Activated CD4-positive, alpha-beta T cell treated with anti-CD3 and anti-CD28 coated beads, Interleukin-2, amount 10 ng/mL, durations not matched to agents 7 days and 5 days (primary cell): ENCODE measurements at regions of chr5 and their contacts with region 1.

Region 1: DNA sequence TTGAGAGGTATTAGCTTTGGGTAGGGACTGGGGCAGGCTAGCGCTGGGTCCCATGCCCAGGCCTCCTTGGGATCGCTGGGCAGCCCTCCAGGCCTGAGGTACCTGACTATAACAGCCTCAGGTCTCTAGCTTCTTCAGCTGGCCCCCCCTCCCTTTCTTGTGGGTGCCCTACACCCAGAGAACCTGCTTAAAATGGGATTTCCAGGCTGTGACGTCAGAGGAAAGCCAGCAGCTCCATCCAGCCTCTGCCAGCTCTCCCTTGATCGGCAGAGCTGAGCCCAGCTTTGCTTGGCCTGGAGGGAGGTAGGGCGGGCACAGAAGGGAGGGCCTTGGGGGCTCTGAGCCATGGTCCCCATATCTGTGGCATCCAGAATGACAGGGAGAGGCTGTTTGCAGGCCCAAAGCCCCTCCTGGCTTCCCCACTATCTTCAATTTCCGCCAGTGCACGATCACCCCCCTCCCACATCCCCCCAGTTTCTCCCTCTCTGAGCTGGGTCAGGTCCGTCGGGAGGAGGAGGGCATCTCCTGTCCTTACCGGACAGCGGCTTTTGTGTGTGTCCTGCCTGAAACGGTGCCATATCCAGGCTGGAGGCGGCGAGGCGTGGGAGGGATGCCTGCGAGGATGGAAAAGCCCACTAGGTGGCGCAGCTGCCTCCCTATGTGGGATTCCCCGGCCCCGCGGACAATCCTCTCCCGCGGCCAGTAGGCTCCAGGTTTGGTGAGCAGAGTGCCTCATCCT is 10.8 kb downstream of the REEP2 start:
- DNase-seq: peak; percentile 76
- H3K4me3 Mint-ChIP-seq: peak overlapping the region; percentile 11
- H3K27ac Mint-ChIP-seq: no peak overlapping the region
- H3K4me1 Mint-ChIP-seq: peaks cover 5% of the 10 kb centered on the region
- H3K27me3 Mint-ChIP-seq: no peaks in the 10 kb centered on the region

Region 2: GRCh38 chr5:138438724-138439476 is 10.8 kb before region 1 on chr5 and contains the start of gene REEP2:
- CTCF ChIA-PET with region 1: interaction called, 49 read pairs
- POLR2A ChIA-PET with region 1: no interaction called
- DNase-seq: peak; percentile 57
- H3K4me3 Mint-ChIP-seq: peak within 1 kb of the TSS; percentile 71
- H3K27ac Mint-ChIP-seq: peak within 1 kb of the TSS; percentile 41
- H3K4me1 Mint-ChIP-seq: peaks cover 9% of the 10 kb centered on the region
- H3K27me3 Mint-ChIP-seq: peaks cover 2% of the 10 kb centered on the region
- total RNA-seq, gene REEP2: 0.62 to 0.77 TPM

Region 3: GRCh38 chr5:138508963-138509362 is 59.3 kb after region 1 on chr5:
- CTCF ChIA-PET with region 1: interaction called, 13 read pairs
- POLR2A ChIA-PET with region 1: no interaction called
- DNase-seq: no peak
- H3K4me3 Mint-ChIP-seq: no peak overlapping the region
- H3K27ac Mint-ChIP-seq: no peak overlapping the region
- H3K4me1 Mint-ChIP-seq: peaks cover 2% of the 10 kb centered on the region
- H3K27me3 Mint-ChIP-seq: no peaks in the 10 kb centered on the region

Region 4: DNA sequence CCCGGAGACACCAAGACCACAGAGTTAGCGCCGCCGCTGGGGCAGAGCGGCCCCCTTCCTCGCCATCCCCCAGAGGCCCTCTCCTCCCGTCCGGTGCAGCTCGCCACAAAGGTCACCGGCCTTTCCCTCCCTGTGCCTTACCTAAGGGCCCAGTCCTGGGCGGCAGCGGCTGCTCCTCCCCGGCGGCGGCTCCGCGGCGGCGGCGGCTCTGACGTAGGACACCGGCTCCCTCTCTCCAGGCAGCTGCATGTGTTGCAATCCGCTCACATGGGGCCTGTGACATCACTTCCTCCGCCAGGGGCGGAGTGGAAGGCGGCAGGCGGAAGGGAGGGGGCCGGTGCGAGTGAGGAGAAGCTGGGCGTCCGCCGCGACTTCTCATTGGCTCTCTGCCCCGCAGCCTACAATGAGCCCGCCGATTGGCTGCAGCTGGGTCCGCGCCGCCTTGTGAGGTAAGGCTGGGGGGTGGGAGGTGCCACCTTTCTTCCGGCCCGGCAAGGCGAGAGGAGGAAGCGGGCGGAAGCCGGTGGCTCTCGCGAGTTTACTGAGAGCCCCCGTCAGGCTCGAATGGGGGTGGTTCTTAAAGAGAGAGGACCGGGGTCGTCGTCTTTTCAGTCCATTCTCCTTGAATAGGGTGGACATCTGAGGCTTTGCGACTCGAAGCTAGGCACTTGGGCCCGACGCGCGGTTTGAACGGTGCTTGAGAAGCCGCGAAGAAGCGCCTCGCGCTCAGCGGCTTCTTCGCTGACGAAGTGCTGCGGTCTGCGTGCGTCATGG is 93.5 kb after region 1 on chr5 and contains the start of gene ETF1:
- CTCF ChIA-PET with region 1: interaction called, 10 read pairs
- POLR2A ChIA-PET with region 1: no interaction called
- DNase-seq: peak; percentile 100
- H3K4me3 Mint-ChIP-seq: peak within 1 kb of the TSS; percentile 99
- H3K27ac Mint-ChIP-seq: peak within 1 kb of the TSS; percentile 100
- H3K4me1 Mint-ChIP-seq: peaks cover 65% of the 10 kb centered on the region
- H3K27me3 Mint-ChIP-seq: no peaks in the 10 kb centered on the region
- total RNA-seq, gene ETF1: 65.3 to 72.1 TPM